ENCODE measurements at regions of chr4 and their contacts with region 1.

Region 1: GRCh38 chr4:145545538-145546174 is 64.0 kb downstream of the SMAD1 start:
- DNase-seq: peak; percentile 97
- ATAC-seq: peak; percentile 95
- H3K4me3 ChIP-seq: peak overlapping the region; percentile 5; the same call in 1 of the 2 replicates
- H3K27ac ChIP-seq: peak overlapping the region; percentile 64
- H3K4me1 ChIP-seq: peaks cover 24% of the 10 kb centered on the region
- H3K27me3 ChIP-seq: no peaks in the 10 kb centered on the region
- CTCF ChIP-seq: no peak

Region 2: GRCh38 chr4:145530189-145530588 is 15.5 kb before region 1 on chr4:
- CTCF ChIA-PET with region 1: no interaction called
- POLR2A ChIA-PET with region 1: no interaction called
- intact Hi-C with region 1: loop called (anchors 1 kb)
- DNase-seq: no peak
- ATAC-seq: peak; percentile 18
- H3K4me3 ChIP-seq: no peak overlapping the region
- H3K27ac ChIP-seq: peak overlapping the region; percentile 60
- H3K4me1 ChIP-seq: peaks cover 38% of the 10 kb centered on the region
- H3K27me3 ChIP-seq: no peaks in the 10 kb centered on the region
- CTCF ChIP-seq: no peak

Region 3: DNA sequence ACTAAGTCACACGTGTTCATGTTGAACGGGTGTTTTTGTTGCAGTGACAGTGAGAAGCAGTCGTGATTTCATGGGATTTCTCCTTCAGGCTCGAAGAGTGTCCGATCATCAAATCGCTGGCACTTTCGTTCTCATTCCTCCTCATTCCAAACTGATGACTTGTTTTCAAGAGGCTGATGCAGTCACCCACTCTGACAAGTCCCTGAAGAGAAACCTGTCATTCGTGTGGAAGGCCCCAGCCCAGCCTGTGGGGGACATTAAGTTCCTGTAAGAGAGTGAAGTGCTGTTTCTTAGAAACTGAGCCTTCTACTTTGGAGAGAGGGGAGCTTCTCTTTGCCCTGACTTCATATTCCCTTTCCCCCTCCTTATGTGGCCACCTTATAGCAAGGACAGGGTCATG is 676.7 kb after region 1 on chr4:
- CTCF ChIA-PET with region 1: no interaction called
- POLR2A ChIA-PET with region 1: no interaction called
- intact Hi-C with region 1: no loop called
- DNase-seq: peak; percentile 88
- ATAC-seq: peak; percentile 95
- H3K4me3 ChIP-seq: peak overlapping the region; percentile 73
- H3K27ac ChIP-seq: no peak overlapping the region
- H3K4me1 ChIP-seq: peaks cover 9% of the 10 kb centered on the region
- H3K27me3 ChIP-seq: no peaks in the 10 kb centered on the region
- CTCF ChIP-seq: no peak

Measured in PC-3 (cell line).